G401 (cell line): ENCODE measurements at regions of chr11 and their contacts with region 1.

Region 1: DNA sequence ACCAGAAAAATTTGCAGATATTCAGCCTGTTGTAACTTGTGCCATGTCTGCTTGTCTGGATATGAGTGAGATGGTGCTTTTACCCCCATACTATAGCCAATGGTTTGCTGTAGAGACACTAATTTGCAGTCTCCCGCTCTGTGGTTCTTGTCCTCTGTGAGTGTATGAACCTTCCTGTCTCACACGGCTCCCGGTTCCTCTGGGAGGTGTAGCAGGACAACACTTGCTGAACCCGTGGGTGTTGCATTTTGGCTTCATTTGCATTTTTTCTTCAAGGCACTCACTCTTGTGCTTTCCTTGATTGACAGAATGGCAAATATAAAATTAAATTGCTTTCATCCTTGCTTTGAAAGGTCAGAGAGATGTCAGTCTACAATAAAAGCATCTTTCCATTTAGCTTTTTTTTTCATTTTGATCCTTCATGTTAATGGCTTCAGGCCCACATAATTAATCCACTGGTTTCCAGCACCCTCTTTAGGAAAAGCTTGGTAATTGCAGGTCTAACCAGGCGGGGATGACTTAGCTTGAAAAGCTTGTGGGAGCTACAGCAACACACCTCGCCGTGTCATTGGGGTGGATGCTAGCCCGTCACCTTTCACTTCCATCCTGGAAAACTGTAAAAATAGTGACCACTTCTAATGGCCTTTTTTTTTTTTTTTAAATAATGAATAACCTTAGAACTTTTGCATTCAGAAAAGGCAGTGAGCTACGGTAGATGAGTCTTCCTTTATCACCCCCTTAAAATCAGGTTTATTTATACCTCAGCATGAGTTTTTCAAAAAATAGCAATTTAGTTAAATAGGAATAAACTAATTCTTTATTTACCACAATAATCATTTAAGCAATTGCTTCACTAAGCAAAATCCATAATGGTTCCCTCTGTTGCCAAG is 27.4 kb upstream of the ST14 start:
- DNase-seq: no peak

Region 2: DNA sequence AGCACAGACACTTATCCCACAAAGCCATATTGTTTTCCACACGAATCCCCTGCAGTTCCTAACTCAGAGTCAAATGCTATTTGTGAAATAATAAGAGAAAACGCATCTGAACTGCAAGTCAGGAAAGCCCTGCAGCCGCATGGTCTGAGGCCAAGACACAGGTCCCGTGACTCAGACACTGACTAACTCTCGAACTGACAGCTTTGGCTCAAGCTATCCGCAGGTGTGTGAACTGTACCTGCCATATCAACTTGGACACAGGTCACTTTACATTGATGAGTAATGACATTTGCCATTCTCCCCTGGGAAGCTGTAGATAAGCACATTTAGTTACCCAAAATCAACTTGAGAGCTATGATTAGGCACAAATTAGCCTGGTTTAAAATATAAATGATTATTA is 201.9 kb before region 1 on chr11:
- in situ Hi-C with region 1: loop called (anchors 25 kb)
- DNase-seq: peak; percentile 79